ENCODE measurements at regions of chr3 and their contacts with region 1.

Region 1: DNA sequence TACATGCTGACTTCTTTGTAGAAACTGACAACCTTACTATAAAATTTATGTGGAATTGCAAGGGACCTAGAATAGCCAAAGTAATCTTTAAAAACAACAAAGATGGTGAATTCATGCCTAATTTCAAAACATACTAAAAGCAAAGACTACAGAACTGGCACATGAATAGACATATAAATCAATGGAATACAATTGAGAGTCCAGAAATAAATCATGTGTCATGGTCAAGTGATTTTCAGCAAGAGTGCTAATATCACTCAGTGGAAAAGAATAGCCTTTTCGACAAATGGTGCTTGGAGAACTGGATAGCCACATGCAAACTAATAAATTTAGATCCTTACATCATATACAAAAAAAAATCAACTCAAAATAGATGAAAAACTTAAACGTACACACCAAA is 8.7 kb downstream of the IMPG2 start:
- DNase-seq: no peak
- H3K4me3 ChIP-seq: no peak overlapping the region
- H3K27ac ChIP-seq: peak overlapping the region; percentile 66 to 67
- H3K4me1 ChIP-seq: peaks cover 0 to 5% of the 10 kb centered on the region in 2 donors
- H3K27me3 ChIP-seq: no peaks in the 10 kb centered on the region
- CTCF ChIP-seq: no peak

Region 2: GRCh38 chr3:101253396-101253795 is 58.3 kb before region 1 on chr3:
- intact Hi-C with region 1: loop called (anchors 2 kb)
- DNase-seq: peak in 1 of 2 donors; percentile 65
- H3K4me3 ChIP-seq: peak overlapping the region in 1 of 2 donors; percentile 4
- H3K27ac ChIP-seq: peak overlapping the region; percentile 70 to 75
- H3K4me1 ChIP-seq: peaks cover 4 to 21% of the 10 kb centered on the region in 2 donors
- H3K27me3 ChIP-seq: no peaks in the 10 kb centered on the region
- CTCF ChIP-seq: no peak

Measured in ascending aorta (tissue), 2 donors.